ENCODE measurements at regions of chr9 and their contacts with region 1.

Region 1: GRCh38 chr9:4315582-4316215 is 15.8 kb upstream of the GLIS3 start:
- DNase-seq: peak; percentile 61
- H3K4me3 ChIP-seq: no peak overlapping the region
- H3K27ac ChIP-seq: no peak overlapping the region
- H3K4me1 ChIP-seq: no peaks in the 10 kb centered on the region
- CTCF ChIP-seq: peak; percentile 92

Region 2: DNA sequence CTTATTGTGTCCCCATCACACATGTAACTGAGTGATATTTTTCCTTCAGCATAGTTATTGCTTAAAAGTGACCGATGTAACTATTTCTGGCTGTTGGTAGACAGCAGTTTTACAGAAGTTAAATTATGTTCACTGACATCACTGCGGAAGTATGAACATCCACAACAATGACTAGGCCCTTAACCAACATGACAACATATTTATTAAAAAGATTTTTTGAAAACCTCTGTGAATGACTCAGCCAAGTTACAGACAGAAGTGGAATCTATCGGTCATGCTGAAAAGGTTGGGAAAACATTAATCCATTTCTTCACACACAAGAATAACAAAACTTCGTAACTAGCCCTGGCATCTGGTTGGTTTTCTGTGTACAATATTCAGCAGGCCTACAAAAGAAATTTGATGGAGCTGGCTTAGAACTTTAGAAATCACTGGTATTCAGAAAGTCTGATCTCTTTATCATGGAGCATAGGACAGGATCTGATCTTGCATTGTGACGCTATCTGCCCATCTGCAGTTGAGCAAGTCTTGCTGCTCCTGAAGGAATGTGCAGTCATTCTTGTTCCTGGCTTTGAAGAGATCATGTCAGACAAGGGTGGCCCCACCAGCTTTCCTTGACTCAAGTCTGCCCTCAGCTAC is 22.3 kb before region 1 on chr9:
- CTCF ChIA-PET with region 1: no interaction called
- POLR2A ChIA-PET with region 1: no interaction called
- intact Hi-C with region 1: no loop called
- DNase-seq: no peak
- H3K4me3 ChIP-seq: no peak overlapping the region
- H3K27ac ChIP-seq: no peak overlapping the region
- H3K4me1 ChIP-seq: no peaks in the 10 kb centered on the region
- CTCF ChIP-seq: no peak

Region 3: GRCh38 chr9:4630836-4631235 is 315.1 kb after region 1 on chr9:
- CTCF ChIA-PET with region 1: no interaction called
- POLR2A ChIA-PET with region 1: no interaction called
- intact Hi-C with region 1: loop called (anchors 10 kb)
- DNase-seq: no peak
- H3K4me3 ChIP-seq: no peak overlapping the region
- H3K27ac ChIP-seq: no peak overlapping the region
- H3K4me1 ChIP-seq: no peaks in the 10 kb centered on the region
- CTCF ChIP-seq: no peak

Region 4: GRCh38 chr9:4750023-4750673 is 434.4 kb after region 1 on chr9:
- CTCF ChIA-PET with region 1: no interaction called
- POLR2A ChIA-PET with region 1: no interaction called
- intact Hi-C with region 1: loop called (anchors 10 kb)
- DNase-seq: peak; percentile 61
- H3K4me3 ChIP-seq: no peak overlapping the region
- H3K27ac ChIP-seq: no peak overlapping the region
- H3K4me1 ChIP-seq: no peaks in the 10 kb centered on the region
- CTCF ChIP-seq: peak; percentile 85